GM10248 (cell line): ENCODE measurements at regions of chr2 and their contacts with region 1.

Region 1: DNA sequence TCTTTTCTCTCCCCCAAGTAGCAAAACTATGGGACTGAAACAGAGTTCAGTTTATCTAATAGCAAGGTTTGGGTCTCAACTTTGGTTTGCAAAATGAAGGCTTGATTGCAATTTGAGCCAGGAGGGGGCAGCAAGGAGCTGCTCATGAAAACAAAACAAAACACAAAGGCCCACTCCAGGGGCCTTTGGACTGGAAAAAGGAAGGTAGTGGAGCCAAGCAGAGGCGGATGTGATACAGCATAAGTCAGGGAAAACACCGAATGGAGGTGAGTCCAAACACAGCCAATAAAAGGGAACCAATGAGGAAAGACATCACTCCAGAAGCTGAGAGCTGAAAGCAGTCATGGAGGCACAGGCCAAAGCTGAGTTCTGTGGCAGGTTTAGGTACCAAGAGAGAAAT is 799.7 kb upstream of the ACVR2A start:
- DNase-seq: peak; percentile 19
- CTCF ChIP-seq: peak; percentile 59

Region 2: DNA sequence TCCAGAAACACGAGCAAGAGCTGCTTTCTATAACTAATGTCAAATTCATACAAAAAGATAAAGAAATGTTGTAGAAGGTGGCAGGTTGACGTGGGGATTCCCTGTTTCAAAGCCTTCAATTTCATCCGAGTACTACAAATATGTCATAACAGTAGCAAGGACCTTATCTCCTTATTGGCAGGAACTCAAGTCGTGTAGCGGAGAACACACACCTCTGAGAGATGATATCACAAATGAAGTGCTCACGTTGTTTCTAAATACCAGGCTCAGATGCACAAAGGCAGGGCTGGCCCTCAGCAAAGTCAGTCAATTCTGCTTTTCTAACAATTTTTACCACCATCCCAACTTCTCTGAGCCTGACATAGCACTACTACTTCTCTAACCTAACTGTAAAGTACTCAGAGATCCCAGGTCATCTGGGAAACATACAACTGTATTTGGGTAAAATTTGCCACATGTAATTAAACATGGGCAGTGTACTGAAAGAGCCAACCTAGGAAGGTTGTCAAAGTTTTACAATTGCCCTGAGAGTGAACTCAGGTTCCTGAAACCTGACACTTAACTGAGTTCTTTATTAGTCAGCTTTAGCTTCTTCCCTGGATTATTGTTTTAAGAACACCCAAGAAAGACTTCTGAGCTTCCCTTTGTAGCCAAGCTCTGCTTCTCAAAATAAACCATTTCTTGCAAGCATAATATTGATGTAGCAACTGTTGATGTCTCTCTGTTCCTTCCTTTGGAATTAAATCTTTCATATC is 14.0 kb before region 1 on chr2:
- CTCF ChIA-PET with region 1: interaction called, 13 read pairs
- POLR2A ChIA-PET with region 1: no interaction called
- DNase-seq: no peak
- CTCF ChIP-seq: no peak

Region 3: GRCh38 chr2:147061269-147061668 is 16.2 kb after region 1 on chr2:
- CTCF ChIA-PET with region 1: interaction called, 26 read pairs
- POLR2A ChIA-PET with region 1: no interaction called
- DNase-seq: no peak
- CTCF ChIP-seq: no peak

Region 4: DNA sequence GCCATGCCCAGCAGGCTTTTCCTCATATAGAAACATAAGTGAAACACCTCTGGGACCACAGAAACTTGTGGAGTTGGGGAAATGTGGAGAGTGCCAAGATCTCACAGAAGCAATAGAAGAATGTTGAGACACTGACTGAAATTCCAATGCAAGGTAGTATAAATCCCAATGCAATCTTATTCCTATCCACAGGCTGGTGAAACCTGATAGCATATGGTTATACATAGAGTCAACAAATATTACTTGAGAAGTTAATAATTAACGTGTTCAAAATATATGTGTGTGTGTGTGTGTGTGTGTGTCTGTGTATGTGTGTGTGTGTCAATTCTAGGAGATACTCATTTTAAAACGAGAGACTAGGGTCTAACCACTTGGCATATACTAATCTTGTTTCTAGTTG is 23.0 kb after region 1 on chr2:
- CTCF ChIA-PET with region 1: interaction called, 15 read pairs
- POLR2A ChIA-PET with region 1: no interaction called
- DNase-seq: no peak
- CTCF ChIP-seq: no peak

Region 5: DNA sequence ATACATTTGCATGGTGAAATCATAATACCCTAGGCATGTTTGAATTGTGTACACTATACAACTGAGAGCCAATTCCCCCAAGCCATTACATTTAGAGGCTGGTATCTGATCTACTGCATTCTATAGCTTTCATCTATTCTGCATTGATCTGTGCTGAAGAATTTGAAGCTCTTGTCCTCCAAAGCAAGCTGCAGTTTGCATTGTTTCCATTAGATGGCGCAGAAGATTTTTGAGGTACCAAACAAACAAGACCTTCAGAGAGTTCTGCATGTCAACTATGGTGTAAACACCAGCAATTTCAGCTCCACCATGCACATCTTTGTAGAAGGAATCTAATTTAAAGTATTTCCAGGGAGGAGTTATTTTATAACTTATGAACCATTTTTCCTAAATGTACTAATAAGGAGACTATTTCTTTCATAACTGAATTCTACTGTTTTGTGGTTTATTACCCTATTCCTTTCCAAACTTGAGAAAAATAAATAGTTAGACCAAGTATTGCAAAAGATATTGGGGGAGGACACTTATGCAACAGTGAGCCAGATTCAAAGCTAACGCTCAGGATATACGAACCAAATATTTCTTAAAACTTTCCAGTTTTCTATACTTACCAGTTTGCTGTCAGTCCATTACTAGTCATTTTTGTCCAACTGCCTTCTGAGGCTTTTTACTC is 37.9 kb after region 1 on chr2:
- CTCF ChIA-PET with region 1: interaction called, 25 read pairs
- POLR2A ChIA-PET with region 1: no interaction called
- DNase-seq: peak; percentile 37
- CTCF ChIP-seq: peak; percentile 89

Region 6: GRCh38 chr2:147331790-147332419 is 286.8 kb after region 1 on chr2:
- CTCF ChIA-PET with region 1: interaction called, 45 read pairs
- POLR2A ChIA-PET with region 1: no interaction called
- DNase-seq: peak; percentile 10
- CTCF ChIP-seq: peak; percentile 28

Region 7: GRCh38 chr2:147910990-147911473 is 865.9 kb after region 1 on chr2:
- CTCF ChIA-PET with region 1: interaction called, 81 read pairs
- POLR2A ChIA-PET with region 1: no interaction called
- DNase-seq: no peak
- CTCF ChIP-seq: peak; percentile 50